Heart right ventricle (tissue), 16 donors: ENCODE measurements at regions of chr11 and their contacts with region 1.

Region 1: DNA sequence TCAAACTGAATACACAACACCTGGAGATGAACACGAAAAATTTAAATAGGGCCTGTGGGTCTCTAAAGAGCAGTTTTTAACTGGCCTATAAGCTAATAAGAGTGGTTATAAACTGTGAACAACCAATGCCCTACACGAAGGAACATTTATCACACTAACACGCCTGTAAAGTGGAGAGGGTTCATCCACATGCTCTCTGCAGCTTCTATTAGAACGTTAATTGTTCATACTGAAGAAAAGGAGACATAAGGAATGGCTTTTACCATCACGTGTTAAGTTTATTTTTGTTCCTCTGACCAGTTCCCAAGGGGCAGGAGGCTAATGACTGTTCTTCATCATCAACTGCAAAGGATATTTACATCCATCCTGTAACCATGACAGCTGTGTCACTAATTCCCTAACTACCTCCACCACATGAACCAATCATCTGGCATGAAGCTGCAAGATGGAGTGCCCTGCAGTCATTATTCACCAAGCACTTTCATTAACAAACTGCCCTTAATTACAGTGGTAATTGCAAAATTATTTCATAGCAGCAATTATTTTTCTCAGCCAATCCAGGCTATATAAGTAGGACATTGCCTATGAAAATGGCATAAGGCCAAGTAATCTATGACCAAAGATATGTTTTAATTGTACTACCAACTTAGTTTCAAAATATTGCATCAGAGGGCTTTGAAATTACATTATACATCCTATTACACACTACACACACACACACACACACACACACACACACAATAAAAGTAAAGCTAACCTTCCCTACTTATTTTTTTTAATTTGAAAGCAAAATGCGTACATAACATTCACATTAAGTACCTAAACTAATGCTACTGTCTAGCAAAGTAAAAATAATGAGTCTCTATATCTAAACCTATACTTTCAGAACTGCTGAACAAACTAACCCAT is 186.7 kb downstream of the CADM1 start:
- DNase-seq: no peak
- ATAC-seq: no peak
- H3K4me3 ChIP-seq: no peak overlapping the region
- H3K27ac ChIP-seq: no peak overlapping the region
- H3K4me1 ChIP-seq: peaks cover 0 to 10% (median 0%) of the 10 kb centered on the region in 9 donors
- H3K27me3 ChIP-seq: no peaks in the 10 kb centered on the region
- CTCF ChIP-seq: no peak

Region 2: GRCh38 chr11:115170133-115170815 is 147.3 kb before region 1 on chr11:
- intact Hi-C with region 1: loop called in 1 of 10 experiments (anchors 10 kb)
- DNase-seq: no peak
- ATAC-seq: no peak
- H3K4me3 ChIP-seq: no peak overlapping the region
- H3K27ac ChIP-seq: no peak overlapping the region
- H3K4me1 ChIP-seq: peaks cover 0 to 13% (median 3%) of the 10 kb centered on the region in 9 donors
- H3K27me3 ChIP-seq: no peaks in the 10 kb centered on the region
- CTCF ChIP-seq: peak in 8 of 9 donors; percentile 68 to 79 (median 71)